Activated T-helper 1 cell treated with anti-CD3 and anti-CD28 coated beads, Interleukin-12 subunit alpha, Interleukin-12 subunit beta, Interleukin-2, Interleukin-4 antibody, amounts not matched to agents 30 ng/mL and 10 ng/mL and 1 ng/mL, durations not matched to agents 14 hours and 24 hours and 36 hours (primary cell): ENCODE measurements at regions of chr9 and their contacts with region 1.

Region 1: GRCh38 chr9:20209391-20210340 is 412.6 kb downstream of the MLLT3 start:
- DNase-seq: peak; percentile 62
- H3K4me3 Mint-ChIP-seq: peak overlapping the region; percentile 25
- H3K27ac Mint-ChIP-seq: peak overlapping the region; percentile 89
- H3K4me1 Mint-ChIP-seq: peaks cover 39% of the 10 kb centered on the region
- H3K27me3 Mint-ChIP-seq: no peaks in the 10 kb centered on the region

Region 2: DNA sequence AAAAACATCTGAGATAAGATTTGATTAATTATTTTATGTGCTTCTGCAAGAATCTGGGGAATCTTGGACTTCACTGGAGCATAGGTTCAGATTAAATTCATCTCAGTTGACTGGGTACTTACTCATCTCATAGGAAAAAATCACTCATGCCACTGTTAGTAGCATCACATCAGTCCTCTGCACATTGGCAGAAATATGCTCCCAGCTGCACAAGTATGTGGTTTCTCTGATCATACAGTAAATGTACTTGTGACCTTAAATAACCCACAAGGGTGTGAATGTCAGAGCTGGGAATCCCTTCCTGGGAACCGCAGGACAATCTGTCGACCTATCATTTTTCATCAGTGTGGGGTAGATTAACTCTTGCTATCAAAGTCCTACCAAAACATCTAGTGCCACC is 217.1 kb before region 1 on chr9:
- intact Hi-C with region 1: loop called (anchors 1 kb)
- DNase-seq: no peak
- H3K4me3 Mint-ChIP-seq: no peak overlapping the region
- H3K27ac Mint-ChIP-seq: peak overlapping the region; percentile 81
- H3K4me1 Mint-ChIP-seq: peaks cover 57% of the 10 kb centered on the region
- H3K27me3 Mint-ChIP-seq: no peaks in the 10 kb centered on the region

Region 3: DNA sequence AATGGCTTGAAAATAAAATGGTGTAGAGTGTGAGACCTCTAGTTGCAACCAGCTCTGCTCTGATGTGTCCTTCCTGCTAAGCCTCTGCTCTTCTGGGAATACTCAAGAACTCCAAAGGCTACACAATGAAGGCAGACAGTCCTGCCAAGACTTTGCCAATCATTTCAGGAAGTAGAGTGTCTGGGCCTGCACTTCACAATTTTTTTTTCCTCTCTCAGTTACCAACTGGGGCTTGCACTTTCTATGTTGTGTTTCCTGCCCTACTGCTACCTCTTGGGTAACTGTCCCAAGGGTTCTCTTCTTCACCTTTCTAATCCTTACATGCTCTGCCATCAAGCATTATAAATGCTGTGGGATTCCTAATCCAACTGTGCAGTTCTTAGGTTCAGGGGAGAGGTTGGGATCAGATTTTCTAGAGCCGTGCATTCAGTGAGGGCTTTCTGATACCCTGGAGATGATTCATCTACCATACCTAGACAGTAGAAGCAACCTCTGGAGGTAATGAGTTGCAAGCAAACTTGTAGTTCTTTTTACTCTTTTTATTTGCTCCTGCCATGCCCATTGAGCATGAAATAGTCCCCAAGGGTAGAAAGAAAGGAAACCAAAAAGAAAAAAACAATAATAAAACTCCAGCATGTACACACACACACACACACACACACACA is 46.8 kb after region 1 on chr9:
- intact Hi-C with region 1: loop called (anchors 5 kb)
- DNase-seq: no peak
- H3K4me3 Mint-ChIP-seq: no peak overlapping the region
- H3K27ac Mint-ChIP-seq: peak overlapping the region; percentile 11
- H3K4me1 Mint-ChIP-seq: peaks cover 40% of the 10 kb centered on the region
- H3K27me3 Mint-ChIP-seq: no peaks in the 10 kb centered on the region

Region 4: GRCh38 chr9:20271096-20271495 is 61.4 kb after region 1 on chr9:
- intact Hi-C with region 1: no loop called
- DNase-seq: no peak
- H3K4me3 Mint-ChIP-seq: no peak overlapping the region
- H3K27ac Mint-ChIP-seq: peak overlapping the region; percentile 27
- H3K4me1 Mint-ChIP-seq: peaks cover 24% of the 10 kb centered on the region
- H3K27me3 Mint-ChIP-seq: no peaks in the 10 kb centered on the region

Region 5: GRCh38 chr9:20552874-20553575 is 343.4 kb after region 1 on chr9:
- intact Hi-C with region 1: loop called (anchors 1 kb)
- DNase-seq: peak; percentile 1
- H3K4me3 Mint-ChIP-seq: peak overlapping the region; percentile 59
- H3K27ac Mint-ChIP-seq: peak overlapping the region; percentile 64
- H3K4me1 Mint-ChIP-seq: peaks cover 76% of the 10 kb centered on the region
- H3K27me3 Mint-ChIP-seq: no peaks in the 10 kb centered on the region

Region 6: DNA sequence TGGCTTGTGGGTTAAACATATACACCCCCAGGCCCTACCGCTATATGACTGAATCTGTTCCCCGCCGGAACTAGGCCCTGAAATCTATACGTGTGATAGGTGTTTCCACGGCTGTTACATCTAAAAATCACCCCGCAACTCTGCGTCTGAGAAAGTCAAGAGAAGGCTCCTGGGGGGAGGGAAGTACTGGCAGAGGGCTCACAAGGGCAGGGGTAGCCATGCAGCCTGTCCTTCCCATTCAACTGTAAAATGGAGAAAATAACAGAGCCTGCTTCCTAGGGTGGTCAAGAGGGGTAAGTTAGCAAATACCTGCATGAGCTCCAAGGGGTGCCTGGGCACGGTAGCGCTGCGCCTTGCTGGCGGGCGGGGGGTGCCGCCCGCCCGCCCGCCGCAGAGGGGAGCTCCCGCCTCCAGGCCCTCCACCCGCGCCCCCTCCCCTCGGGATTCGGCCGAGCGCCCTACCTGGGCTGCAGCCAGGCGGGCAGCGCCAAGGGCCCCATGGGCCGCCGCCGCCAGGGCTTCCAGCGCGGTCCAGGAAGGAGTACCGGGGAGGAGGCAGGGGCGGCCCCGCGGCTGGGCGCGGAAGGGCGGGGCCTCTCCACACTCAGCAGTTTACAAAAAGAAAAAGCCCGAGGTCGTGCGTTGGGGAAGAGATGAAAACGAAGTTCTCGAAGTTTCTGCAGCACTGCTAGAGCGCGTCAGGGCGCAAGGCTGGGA is 821.6 kb after region 1 on chr9 and contains the start of gene HACD4:
- intact Hi-C with region 1: loop called (anchors 10 kb)
- DNase-seq: peak; percentile 67
- H3K4me3 Mint-ChIP-seq: peak within 1 kb of the TSS; percentile 63
- H3K27ac Mint-ChIP-seq: peak within 1 kb of the TSS; percentile 27
- H3K4me1 Mint-ChIP-seq: peaks cover 23% of the 10 kb centered on the region
- H3K27me3 Mint-ChIP-seq: no peaks in the 10 kb centered on the region
- total RNA-seq, gene HACD4: 2.7 and 3.0 TPM in 2 replicates